IMR-90 (cell line): ENCODE measurements at regions of chr1 and their contacts with region 1.

Region 1: GRCh38 chr1:39086865-39087409 is 60.8 kb downstream of the NDUFS5 start:
- DNase-seq: peak; percentile 76
- ATAC-seq: peak; percentile 36
- H3K4me3 ChIP-seq: no peak overlapping the region
- H3K27ac ChIP-seq: peak overlapping the region; percentile 20; the same call in 1 of the 2 replicates
- H3K4me1 ChIP-seq: peaks cover 13% of the 10 kb centered on the region
- H3K27me3 ChIP-seq: peaks cover 23% of the 10 kb centered on the region
- CTCF ChIP-seq: no peak
- POLR2A ChIP-seq: no peak
- RAD21 ChIP-seq: no peak

Region 2: DNA sequence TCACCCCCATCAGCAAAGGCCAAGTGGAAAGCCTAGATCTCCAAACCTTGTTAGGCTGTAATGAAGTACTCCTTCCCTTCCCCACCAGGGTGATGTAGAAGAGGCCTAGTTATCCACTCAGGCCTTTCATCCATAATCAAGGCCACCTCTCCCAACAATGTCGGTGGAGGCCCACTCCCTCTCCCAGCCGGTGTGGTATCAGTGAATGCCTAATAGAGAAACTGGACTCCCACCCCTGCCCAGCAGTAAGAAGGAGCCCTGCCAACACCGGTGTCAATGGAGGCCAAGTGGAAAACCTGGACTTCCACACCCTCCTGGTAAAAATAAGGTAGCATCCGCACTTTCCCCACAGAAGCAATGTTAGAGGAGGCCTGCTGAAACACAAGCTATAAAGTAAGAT is 36.9 kb before region 1 on chr1:
- CTCF ChIA-PET with region 1: no interaction called
- POLR2A ChIA-PET with region 1: no interaction called
- dilution Hi-C with region 1: no loop called
- in situ Hi-C with region 1: no loop called
- intact Hi-C with region 1: loop called (anchors 5 kb)
- DNase-seq: no peak
- ATAC-seq: no peak
- H3K4me3 ChIP-seq: no peak overlapping the region
- H3K27ac ChIP-seq: no peak overlapping the region
- H3K4me1 ChIP-seq: no peaks in the 10 kb centered on the region; the same call in 1 of the 2 replicates
- H3K27me3 ChIP-seq: no peaks in the 10 kb centered on the region
- CTCF ChIP-seq: no peak
- POLR2A ChIP-seq: no peak
- RAD21 ChIP-seq: no peak